ENCODE measurements at regions of chr5 and their contacts with region 1.

Region 1: DNA sequence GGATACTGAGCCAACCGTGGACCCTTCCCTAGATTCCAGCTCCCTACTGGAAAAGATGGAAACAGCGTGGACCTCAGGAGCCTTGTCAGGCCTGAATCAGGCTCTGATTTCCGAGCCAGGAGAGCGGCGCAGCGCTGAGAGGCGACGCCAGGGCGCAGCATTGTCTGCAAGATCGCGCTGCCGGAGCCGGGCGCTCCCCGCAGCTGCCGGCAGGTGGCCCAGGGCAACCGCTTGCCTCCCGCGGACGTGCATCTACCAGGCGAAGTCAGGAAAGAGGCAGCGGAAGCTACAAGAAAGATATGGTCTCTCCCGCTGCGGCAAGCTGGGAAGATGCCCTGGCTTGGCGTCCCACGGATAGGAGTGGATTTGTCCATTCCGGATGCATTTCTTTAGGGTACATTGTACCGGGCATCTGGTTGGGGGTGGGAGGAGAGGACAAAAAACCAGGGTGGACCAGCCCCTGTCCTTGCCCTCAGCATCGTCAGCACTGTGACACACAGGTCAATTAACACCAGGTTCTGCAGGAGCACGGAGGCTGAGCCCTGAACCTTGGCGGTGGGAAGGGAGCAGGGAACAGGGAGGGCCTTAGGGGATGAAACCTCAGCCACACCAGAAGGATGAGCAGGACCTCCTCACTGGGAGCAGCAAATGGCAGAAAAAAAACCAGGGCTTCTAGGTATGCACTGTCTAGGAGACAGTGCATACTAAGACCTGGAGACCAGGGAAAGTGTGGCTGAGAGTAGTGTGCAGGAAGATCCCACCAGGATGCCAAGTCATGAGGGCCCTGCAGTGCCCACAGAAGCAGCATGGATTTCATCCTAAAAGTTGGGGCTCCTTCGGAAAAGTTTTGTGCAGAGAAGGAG is 55.9 kb downstream of the SFXN1 start:
- DNase-seq: peak; percentile 89
- ATAC-seq: peak; percentile 95 to 97
- H3K4me3 ChIP-seq: no peak overlapping the region
- H3K27ac ChIP-seq: no peak overlapping the region
- H3K4me1 ChIP-seq: peaks cover 4% of the 10 kb centered on the region
- H3K27me3 ChIP-seq: peaks cover 5% of the 10 kb centered on the region
- CTCF ChIP-seq: peak; percentile 97

Region 2: DNA sequence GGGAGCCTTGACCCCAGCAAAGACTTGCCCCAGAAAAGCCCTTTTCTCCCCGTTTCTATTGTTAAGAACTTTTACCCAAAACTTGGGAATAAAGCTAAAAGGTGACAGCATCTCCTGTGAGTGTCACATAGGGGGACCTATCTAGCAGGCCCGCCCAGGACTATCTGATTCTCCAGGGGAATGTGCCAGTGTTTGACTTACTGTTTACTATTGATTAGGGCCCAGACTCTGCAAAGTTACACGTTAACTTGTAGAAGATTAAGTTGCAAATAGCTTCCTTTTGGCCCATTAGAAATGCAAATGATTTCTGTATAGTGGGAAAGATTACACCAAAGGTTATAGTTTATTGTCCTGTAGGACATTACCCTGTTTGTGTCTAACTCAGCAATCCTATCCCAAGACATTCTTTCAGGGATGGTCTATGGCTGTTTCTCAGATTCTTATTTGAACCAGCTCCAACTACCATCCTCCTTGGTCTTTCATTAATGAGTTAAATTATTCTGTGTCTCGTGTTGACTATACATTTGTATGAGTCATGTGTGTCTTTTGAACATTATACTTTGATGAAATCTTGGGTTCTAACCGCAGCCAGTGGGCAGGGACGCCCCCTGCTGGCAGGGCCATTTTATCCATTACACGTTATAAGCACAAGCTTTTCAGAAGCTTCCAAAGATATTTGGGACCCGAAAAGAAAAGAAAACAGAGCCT is 184.3 kb after region 1 on chr5:
- intact Hi-C with region 1: loop called (anchors 10 kb)
- DNase-seq: peak; percentile 75
- ATAC-seq: peak in 1 of 2 donors; percentile 65
- H3K4me3 ChIP-seq: no peak overlapping the region
- H3K27ac ChIP-seq: no peak overlapping the region
- H3K4me1 ChIP-seq: no peaks in the 10 kb centered on the region
- H3K27me3 ChIP-seq: peaks cover 8% of the 10 kb centered on the region
- CTCF ChIP-seq: peak; percentile 76

Measured in lower lobe of right lung (tissue), 2 donors.